Mammary epithelial cell (primary cell): ENCODE measurements at regions of chr1 and their contacts with region 1.

Region 1: DNA sequence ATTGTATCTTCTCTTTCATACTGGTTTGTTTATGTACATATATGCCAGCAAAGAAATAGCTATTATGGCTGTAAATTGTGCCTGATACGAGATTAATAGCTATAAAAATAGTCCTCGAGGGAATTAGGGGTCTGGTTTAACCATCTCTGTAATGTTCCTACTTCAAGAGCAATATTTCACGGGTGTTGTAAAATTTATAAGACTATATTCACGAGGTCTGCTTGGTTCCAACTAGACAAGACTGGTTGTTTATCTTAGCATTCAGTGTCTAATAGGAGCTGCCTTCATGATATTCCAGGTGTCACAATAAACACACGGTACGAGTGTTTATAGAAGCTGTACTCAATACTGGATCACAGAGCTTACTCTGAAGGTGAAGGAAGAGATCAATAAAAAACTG is 389.9 kb downstream of the SIPA1L2 start:
- DNase-seq: no peak
- H3K4me3 ChIP-seq: no peak overlapping the region
- H3K27ac ChIP-seq: no peak overlapping the region
- H3K4me1 ChIP-seq: no peaks in the 10 kb centered on the region
- H3K27me3 ChIP-seq: no peaks in the 10 kb centered on the region
- CTCF ChIP-seq: no peak

Region 2: DNA sequence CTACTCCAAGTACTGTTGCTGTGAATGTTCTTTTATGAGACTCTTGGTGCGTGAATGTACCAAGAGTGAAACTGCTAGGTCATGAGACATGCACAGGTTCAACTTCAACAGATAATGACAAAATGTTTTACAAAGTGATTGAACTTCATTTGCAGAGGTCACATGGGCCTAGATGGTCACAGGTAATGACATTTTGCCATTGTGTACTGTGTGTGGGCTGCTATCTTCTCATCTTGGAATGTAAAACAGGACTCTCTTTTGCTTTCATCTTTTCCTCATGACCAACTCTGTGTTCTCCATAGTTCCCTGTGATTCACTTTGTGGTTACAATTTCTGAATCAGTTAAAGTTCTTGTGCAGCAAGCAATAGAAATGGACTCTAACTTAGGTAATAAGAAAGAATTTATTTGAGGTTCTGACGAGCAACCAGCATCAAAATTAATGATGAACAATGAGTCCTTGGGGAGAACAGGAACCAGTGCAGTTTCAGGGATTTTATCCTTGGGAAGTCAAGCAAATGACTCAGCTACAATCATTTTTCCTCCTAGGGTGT is 727.8 kb before region 1 on chr1:
- CTCF ChIA-PET with region 1: no interaction called
- dilution Hi-C with region 1: no loop called
- in situ Hi-C with region 1: no loop called
- intact Hi-C with region 1: no loop called
- DNase-seq: peak; percentile 96
- H3K4me3 ChIP-seq: no peak overlapping the region
- H3K27ac ChIP-seq: peak overlapping the region; percentile 57
- H3K4me1 ChIP-seq: peaks cover 10% of the 10 kb centered on the region
- H3K27me3 ChIP-seq: no peaks in the 10 kb centered on the region
- CTCF ChIP-seq: no peak

Region 3: GRCh38 chr1:232174306-232174705 is 65.7 kb before region 1 on chr1:
- CTCF ChIA-PET with region 1: no interaction called
- dilution Hi-C with region 1: loop called (anchors 5 kb)
- in situ Hi-C with region 1: no loop called
- intact Hi-C with region 1: no loop called
- DNase-seq: no peak
- H3K4me3 ChIP-seq: no peak overlapping the region
- H3K27ac ChIP-seq: no peak overlapping the region
- H3K4me1 ChIP-seq: no peaks in the 10 kb centered on the region
- H3K27me3 ChIP-seq: no peaks in the 10 kb centered on the region
- CTCF ChIP-seq: no peak

Region 4: GRCh38 chr1:232211149-232211548 is 28.8 kb before region 1 on chr1:
- CTCF ChIA-PET with region 1: no interaction called
- dilution Hi-C with region 1: no loop called
- in situ Hi-C with region 1: no loop called
- intact Hi-C with region 1: loop called (anchors 1 kb)
- DNase-seq: no peak
- H3K4me3 ChIP-seq: no peak overlapping the region
- H3K27ac ChIP-seq: no peak overlapping the region
- H3K4me1 ChIP-seq: no peaks in the 10 kb centered on the region
- H3K27me3 ChIP-seq: no peaks in the 10 kb centered on the region
- CTCF ChIP-seq: peak; percentile 42 to 51

Region 5: GRCh38 chr1:233281711-233282581 is 1041.9 kb after region 1 on chr1:
- CTCF ChIA-PET with region 1: no interaction called
- dilution Hi-C with region 1: no loop called
- in situ Hi-C with region 1: no loop called
- intact Hi-C with region 1: no loop called
- DNase-seq: peak; percentile 3
- H3K4me3 ChIP-seq: no peak overlapping the region
- H3K27ac ChIP-seq: no peak overlapping the region
- H3K4me1 ChIP-seq: peaks cover 7% of the 10 kb centered on the region
- H3K27me3 ChIP-seq: no peaks in the 10 kb centered on the region
- CTCF ChIP-seq: no peak